B cell (primary cell): ENCODE measurements at regions of chr5 and their contacts with region 1.

Region 1: GRCh38 chr5:91419571-91420537 is 36.7 kb upstream of the ARRDC3 start:
- DNase-seq: peak; percentile 72
- ATAC-seq: no peak
- H3K4me3 ChIP-seq: no peak overlapping the region
- H3K4me3 Mint-ChIP-seq: no peak overlapping the region
- H3K27ac ChIP-seq: no peak overlapping the region
- H3K27ac Mint-ChIP-seq: no peak overlapping the region
- H3K4me1 ChIP-seq: no peaks in the 10 kb centered on the region
- H3K4me1 Mint-ChIP-seq: no peaks in the 10 kb centered on the region
- H3K27me3 ChIP-seq: no peaks in the 10 kb centered on the region
- H3K27me3 Mint-ChIP-seq: no peaks in the 10 kb centered on the region
- CTCF ChIP-seq: peak; percentile 89

Region 2: GRCh38 chr5:90866333-90866732 is 553.5 kb before region 1 on chr5:
- CTCF ChIA-PET with region 1: interaction called, 201 read pairs
- POLR2A ChIA-PET with region 1: no interaction called
- intact Hi-C with region 1: loop called (anchors 1 kb)
- DNase-seq: peak; percentile 47
- ATAC-seq: peak; percentile 31
- H3K4me3 ChIP-seq: no peak overlapping the region
- H3K4me3 Mint-ChIP-seq: no peak overlapping the region
- H3K27ac ChIP-seq: no peak overlapping the region
- H3K27ac Mint-ChIP-seq: no peak overlapping the region
- H3K4me1 ChIP-seq: no peaks in the 10 kb centered on the region
- H3K4me1 Mint-ChIP-seq: peaks cover 2% of the 10 kb centered on the region
- H3K27me3 ChIP-seq: peaks cover 0 to 3% (median 0%) of the 10 kb centered on the region in 4 experiments
- H3K27me3 Mint-ChIP-seq: peaks cover 11% of the 10 kb centered on the region
- CTCF ChIP-seq: peak; percentile 73

Region 3: DNA sequence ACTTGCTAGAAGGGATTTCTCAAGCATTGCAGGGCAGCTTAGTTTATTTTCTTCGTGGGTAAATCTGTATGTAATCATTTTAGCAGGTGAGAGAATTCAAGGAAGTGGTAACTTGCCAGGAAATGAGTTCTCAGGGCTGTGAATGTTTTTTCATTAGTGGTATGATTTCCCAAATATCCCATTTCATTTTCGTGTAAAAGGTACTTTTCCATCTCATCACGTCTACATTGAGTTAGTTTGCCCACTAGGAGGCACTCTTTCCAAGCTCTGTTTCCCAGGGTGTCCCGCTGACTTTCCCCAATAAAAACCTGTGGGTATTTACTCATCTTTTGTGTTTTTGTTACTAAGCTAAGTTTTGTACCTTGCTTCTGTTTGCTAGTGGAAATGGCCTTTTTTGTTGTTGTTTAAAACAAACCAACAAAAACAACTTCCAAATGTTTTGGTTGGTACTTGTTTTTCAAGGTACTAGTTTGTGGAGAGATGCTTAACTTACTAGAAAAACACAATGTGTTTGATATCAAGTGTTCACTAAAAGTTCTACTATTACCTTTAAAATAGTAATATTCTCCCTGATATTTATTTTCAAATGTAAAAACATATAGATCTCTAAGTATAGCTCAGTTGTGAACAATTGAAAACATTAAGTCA is 487.7 kb before region 1 on chr5:
- CTCF ChIA-PET with region 1: interaction called, 74 read pairs
- POLR2A ChIA-PET with region 1: no interaction called
- intact Hi-C with region 1: no loop called
- DNase-seq: peak; percentile 39
- ATAC-seq: no peak
- H3K4me3 ChIP-seq: no peak overlapping the region
- H3K4me3 Mint-ChIP-seq: no peak overlapping the region
- H3K27ac ChIP-seq: no peak overlapping the region
- H3K27ac Mint-ChIP-seq: no peak overlapping the region
- H3K4me1 ChIP-seq: no peaks in the 10 kb centered on the region
- H3K4me1 Mint-ChIP-seq: no peaks in the 10 kb centered on the region
- H3K27me3 ChIP-seq: peaks cover 0 to 5% (median 0%) of the 10 kb centered on the region in 4 experiments
- H3K27me3 Mint-ChIP-seq: peaks cover 10% of the 10 kb centered on the region
- CTCF ChIP-seq: peak; percentile 70

Region 4: DNA sequence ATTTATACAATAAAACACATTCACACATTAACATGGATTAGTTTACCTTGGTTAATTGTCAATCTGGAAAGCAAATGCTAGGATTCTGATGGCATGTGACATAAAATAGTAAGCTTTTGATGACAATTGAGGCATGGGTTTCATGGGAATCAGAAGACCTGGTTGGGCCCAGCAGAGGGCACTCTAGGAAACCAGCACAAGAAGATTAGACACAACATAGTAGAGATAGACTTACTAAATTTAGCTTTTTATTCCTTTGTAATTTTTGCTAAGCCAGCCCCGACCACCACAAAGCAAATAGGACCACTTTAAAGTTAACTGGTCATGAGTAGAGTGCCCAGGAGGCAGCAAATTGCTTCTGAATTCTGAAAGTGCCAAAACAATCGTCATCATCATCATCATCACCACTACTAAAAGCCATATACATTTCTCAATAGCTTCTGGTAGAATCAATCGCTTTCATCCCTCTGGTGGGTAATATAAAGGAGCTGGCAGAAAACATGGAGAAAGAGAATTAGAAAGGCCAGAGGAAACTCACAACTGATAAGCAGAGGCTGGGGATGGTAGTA is 200.0 kb before region 1 on chr5:
- CTCF ChIA-PET with region 1: interaction called, 28 read pairs
- POLR2A ChIA-PET with region 1: no interaction called
- intact Hi-C with region 1: no loop called
- DNase-seq: peak; percentile 19
- ATAC-seq: no peak
- H3K4me3 ChIP-seq: no peak overlapping the region
- H3K4me3 Mint-ChIP-seq: no peak overlapping the region
- H3K27ac ChIP-seq: no peak overlapping the region
- H3K27ac Mint-ChIP-seq: no peak overlapping the region
- H3K4me1 ChIP-seq: no peaks in the 10 kb centered on the region
- H3K4me1 Mint-ChIP-seq: no peaks in the 10 kb centered on the region
- H3K27me3 ChIP-seq: no peaks in the 10 kb centered on the region
- H3K27me3 Mint-ChIP-seq: peaks cover 7% of the 10 kb centered on the region
- CTCF ChIP-seq: no peak

Region 5: DNA sequence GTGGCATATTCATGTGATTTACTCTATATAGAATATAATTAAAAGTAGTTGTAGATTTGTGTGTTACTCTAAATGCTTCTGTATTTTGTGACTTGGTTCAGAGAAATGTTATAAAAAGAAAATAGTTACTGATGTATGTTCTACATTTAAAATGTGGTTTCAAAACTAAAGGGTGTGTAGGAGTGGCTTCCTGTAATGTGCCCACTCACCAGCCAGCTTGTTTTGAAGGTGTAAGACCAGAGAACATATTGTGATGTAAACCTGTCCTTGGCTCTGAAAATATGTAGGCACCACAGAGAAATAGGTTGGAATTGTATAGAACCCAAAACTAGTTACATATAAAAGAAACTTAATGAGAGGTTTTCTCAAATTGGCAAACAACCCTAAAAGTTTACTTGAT is 14.5 kb after region 1 on chr5:
- CTCF ChIA-PET with region 1: interaction called, 21 read pairs
- POLR2A ChIA-PET with region 1: no interaction called
- intact Hi-C with region 1: no loop called
- DNase-seq: no peak
- ATAC-seq: no peak
- H3K4me3 ChIP-seq: no peak overlapping the region
- H3K4me3 Mint-ChIP-seq: no peak overlapping the region
- H3K27ac ChIP-seq: peak overlapping the region; percentile 4 to 41
- H3K27ac Mint-ChIP-seq: no peak overlapping the region
- H3K4me1 ChIP-seq: peaks cover 4 to 13% of the 10 kb centered on the region in 2 donors
- H3K4me1 Mint-ChIP-seq: peaks cover 13% of the 10 kb centered on the region
- H3K27me3 ChIP-seq: no peaks in the 10 kb centered on the region
- H3K27me3 Mint-ChIP-seq: no peaks in the 10 kb centered on the region
- CTCF ChIP-seq: no peak

Region 6: DNA sequence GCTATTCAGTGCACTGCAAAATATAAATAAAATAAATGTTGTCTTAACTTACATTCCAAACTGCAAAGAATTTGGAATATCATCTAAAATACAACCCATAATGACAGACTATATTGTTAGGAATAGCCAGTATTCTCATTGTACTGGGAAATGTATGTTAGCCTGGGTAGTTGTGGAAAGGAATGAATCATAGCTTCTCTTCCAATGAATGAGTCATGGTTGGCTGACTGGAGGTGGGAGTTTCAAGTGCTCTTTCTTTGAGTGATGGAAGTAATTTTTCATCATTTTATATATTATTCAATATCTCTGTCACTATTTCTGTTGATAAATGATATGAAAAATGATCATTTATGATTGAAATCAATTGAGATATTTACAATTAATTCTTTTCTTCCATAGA is 121.8 kb after region 1 on chr5:
- CTCF ChIA-PET with region 1: no interaction called
- POLR2A ChIA-PET with region 1: no interaction called
- intact Hi-C with region 1: no loop called
- DNase-seq: no peak
- ATAC-seq: no peak
- H3K4me3 ChIP-seq: no peak overlapping the region
- H3K4me3 Mint-ChIP-seq: no peak overlapping the region
- H3K27ac ChIP-seq: no peak overlapping the region
- H3K27ac Mint-ChIP-seq: no peak overlapping the region
- H3K4me1 ChIP-seq: no peaks in the 10 kb centered on the region
- H3K4me1 Mint-ChIP-seq: no peaks in the 10 kb centered on the region
- H3K27me3 ChIP-seq: no peaks in the 10 kb centered on the region
- H3K27me3 Mint-ChIP-seq: no peaks in the 10 kb centered on the region
- CTCF ChIP-seq: no peak